ENCODE measurements at regions of chrX and their contacts with region 1.

Region 1: GRCh38 chrX:154762523-154763289 is at the start of gene DKC1:
- DNase-seq: peak; percentile 95 to 96
- H3K4me3 ChIP-seq: peak within 1 kb of the TSS; percentile 78
- H3K4me3 Mint-ChIP-seq: peak within 1 kb of the TSS; percentile 84
- H3K27ac Mint-ChIP-seq: peak within 1 kb of the TSS; percentile 84
- H3K4me1 ChIP-seq: no peaks in the 10 kb centered on the region
- H3K4me1 Mint-ChIP-seq: no peaks in the 10 kb centered on the region
- H3K27me3 ChIP-seq: no peaks in the 10 kb centered on the region
- H3K27me3 Mint-ChIP-seq: no peaks in the 10 kb centered on the region
- CTCF ChIP-seq: no peak
- total RNA-seq, gene DKC1: 106 and 107 TPM in 2 replicates

Region 2: DNA sequence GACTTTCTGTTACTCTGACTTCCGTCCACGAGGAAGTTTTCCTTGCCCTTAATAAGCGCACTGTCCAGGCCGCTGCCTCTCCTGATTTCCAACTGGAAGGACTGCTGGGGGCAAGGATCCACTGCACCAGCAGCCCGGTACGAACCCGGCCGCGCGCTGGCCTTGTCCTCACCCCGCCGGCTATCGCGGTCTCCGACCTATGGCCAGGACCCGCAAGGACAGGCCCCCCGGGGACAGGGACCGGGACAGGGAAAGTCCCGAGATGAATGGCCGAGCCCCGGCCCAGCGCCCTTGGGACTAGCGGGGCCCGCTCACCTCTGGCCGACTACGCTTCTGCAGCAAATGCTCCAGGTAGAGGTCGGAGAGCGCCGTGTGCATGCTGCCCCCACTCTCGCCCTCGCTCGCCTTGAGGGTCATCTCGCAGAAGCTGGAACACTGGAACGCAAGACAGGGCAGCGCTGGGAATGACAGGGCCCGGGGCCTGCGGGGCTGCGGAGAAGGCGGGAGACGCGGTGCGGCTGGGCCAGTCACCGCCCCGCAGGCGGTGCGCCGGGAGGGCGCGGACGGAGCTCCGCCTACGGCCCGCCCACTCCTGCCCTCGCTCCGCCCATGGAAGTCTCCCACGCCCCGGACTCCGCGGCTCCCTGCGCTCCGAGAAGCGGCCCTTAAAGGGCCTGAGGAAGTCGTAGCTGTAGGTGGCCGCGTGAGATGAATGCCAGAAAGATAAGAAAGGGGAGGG is 42.4 kb after region 1 on chrX and contains the start of gene MPP1:
- CTCF ChIA-PET with region 1: no interaction called
- POLR2A ChIA-PET with region 1: interaction called, 4 read pairs
- intact Hi-C with region 1: loop called (anchors 1 kb)
- DNase-seq: peak; percentile 75 to 86
- H3K4me3 ChIP-seq: peak within 1 kb of the TSS; percentile 63
- H3K4me3 Mint-ChIP-seq: peak within 1 kb of the TSS; percentile 87
- H3K27ac Mint-ChIP-seq: peak within 1 kb of the TSS; percentile 73
- H3K4me1 ChIP-seq: peaks cover 17% of the 10 kb centered on the region
- H3K4me1 Mint-ChIP-seq: no peaks in the 10 kb centered on the region
- H3K27me3 ChIP-seq: no peaks in the 10 kb centered on the region
- H3K27me3 Mint-ChIP-seq: no peaks in the 10 kb centered on the region
- CTCF ChIP-seq: no peak
- total RNA-seq, gene MPP1: 26.6 and 27.0 TPM in 2 replicates

Measured in Caco-2 (cell line).